ENCODE measurements at regions of chr5 and their contacts with region 1.

Region 1: DNA sequence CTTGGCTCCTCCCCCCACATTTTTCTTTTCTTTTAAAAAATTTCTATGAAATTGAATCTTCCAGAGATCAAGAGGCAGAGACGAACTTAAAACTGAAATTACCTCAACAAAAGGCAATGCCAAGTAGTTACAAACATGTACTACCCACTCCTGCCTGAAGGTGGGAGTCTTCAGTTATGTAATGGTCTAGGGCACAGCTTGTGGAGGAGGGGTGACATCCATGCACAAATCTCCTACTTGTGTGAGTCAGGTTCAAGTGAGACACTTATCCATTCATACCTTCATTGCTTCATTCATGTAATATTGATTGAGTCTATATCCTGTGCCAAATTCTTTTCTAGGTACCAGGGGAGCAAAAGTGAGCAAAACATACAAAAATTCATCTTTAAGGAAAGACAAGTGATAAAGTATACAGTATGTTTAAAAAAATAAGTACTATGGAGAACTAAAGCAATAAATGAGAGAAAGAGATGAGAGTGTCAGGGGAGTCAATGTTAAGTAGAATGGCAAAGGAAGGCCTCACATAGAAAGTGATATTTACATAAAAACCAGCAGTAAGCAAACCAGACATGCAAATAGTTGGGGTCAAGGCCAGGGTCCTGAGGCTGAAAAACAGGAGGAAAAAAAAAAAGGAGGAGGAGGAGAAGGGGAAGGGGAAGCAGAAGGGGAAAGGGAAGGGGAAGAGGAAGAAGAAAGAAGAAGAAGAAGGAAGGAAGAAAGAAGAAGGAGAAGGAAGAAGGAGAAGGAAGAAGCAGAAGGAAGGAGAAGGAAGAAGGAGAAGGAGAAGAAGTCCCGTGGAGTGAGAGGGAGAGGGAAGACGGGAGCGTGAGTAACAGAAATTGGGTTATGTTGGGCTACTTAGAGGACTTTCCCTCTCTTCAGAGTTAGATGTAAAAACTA is 24.9 kb upstream of the NSG2 start:
- DNase-seq: peak; percentile 73
- H3K4me3 Mint-ChIP-seq: no peak overlapping the region
- H3K27ac Mint-ChIP-seq: no peak overlapping the region
- H3K4me1 Mint-ChIP-seq: no peaks in the 10 kb centered on the region
- H3K27me3 Mint-ChIP-seq: peaks cover 70% of the 10 kb centered on the region
- CTCF ChIP-seq: peak; percentile 62

Region 2: DNA sequence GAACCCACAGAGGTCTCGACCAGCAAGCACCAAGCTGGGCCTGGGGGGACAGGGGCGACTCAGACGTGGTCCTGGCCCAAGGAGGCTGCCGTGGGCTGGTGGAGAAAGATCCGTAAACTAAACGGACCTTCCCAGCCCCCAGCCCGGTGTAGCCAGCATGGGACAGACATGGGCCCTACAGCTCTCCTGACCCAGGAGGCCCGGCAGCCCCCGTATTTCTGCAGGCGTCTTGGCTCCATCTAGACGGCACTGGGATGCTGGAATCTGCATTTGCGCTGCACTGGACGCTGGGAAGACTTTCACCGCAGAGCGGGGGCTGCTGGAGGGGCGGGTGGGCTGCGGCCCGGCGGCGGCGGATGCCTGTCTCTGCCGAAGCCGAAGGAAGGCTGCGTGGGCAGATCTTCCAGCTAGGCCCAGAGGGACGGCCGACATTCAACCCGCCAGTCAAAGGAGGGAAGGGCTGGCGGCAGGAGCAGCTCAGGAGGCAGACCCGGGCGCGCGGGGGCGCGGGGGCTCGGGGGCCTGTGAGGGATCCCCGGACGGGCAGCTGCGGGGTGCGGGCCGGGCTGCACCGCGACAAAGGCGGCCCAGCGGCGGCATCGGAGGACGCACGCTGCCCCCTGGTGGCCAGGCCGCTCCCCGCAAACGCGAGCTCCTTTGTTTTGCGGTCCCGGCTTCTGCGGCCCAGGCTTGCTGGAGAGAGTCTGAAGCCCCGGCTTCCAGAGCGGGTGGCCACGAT is 291.1 kb after region 1 on chr5:
- CTCF ChIA-PET with region 1: interaction called, 12 read pairs
- intact Hi-C with region 1: no loop called
- DNase-seq: peak; percentile 88
- H3K4me3 Mint-ChIP-seq: no peak overlapping the region
- H3K27ac Mint-ChIP-seq: no peak overlapping the region
- H3K4me1 Mint-ChIP-seq: no peaks in the 10 kb centered on the region
- H3K27me3 Mint-ChIP-seq: peaks cover 97% of the 10 kb centered on the region
- CTCF ChIP-seq: peak; percentile 88

Region 3: GRCh38 chr5:174317259-174317894 is 296.7 kb after region 1 on chr5:
- CTCF ChIA-PET with region 1: interaction called, 12 read pairs
- intact Hi-C with region 1: loop called (anchors 1 kb)
- DNase-seq: peak; percentile 60
- H3K4me3 Mint-ChIP-seq: no peak overlapping the region
- H3K27ac Mint-ChIP-seq: no peak overlapping the region
- H3K4me1 Mint-ChIP-seq: no peaks in the 10 kb centered on the region
- H3K27me3 Mint-ChIP-seq: peaks cover 100% of the 10 kb centered on the region
- CTCF ChIP-seq: peak; percentile 76

Region 4: GRCh38 chr5:174386306-174386705 is 365.7 kb after region 1 on chr5:
- CTCF ChIA-PET with region 1: no interaction called
- intact Hi-C with region 1: no loop called
- DNase-seq: no peak
- H3K4me3 Mint-ChIP-seq: no peak overlapping the region
- H3K27ac Mint-ChIP-seq: no peak overlapping the region
- H3K4me1 Mint-ChIP-seq: peaks cover 33% of the 10 kb centered on the region
- H3K27me3 Mint-ChIP-seq: no peaks in the 10 kb centered on the region
- CTCF ChIP-seq: no peak